ENCODE measurements at regions of chr11 and their contacts with region 1.

Region 1: DNA sequence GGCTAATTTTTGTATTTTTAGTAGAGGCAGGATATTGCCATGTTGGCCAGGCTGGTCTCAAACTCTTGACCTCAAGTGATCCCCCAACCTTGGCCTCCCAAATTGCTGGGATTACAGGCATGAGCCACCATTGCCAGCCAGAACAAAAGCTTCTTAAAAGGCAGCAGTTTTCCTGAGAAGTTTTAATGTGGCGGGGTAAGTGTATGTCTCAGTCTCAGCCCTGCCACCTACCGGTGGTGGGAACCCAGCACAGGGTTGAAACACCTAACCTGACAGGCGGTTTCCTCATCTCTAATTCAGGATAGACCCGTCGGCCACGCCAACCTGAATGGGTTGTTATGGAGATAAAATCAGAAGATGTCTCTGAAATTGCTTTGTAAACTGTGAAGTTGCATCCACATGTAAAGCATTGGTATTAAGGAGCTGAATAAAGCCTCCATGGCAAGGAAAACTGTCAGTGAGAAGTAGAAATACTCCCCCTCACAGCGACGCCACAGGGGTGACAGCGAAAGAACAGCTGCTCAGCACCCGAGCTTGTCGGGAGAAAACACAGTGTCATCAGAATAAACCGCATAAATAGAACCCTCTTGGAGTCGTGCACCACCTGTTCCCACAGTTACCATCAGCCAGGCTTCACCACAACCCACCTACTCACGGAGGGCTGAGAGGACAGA is 165.9 kb upstream of the NCAM1 start:
- DNase-seq: peak; percentile 45
- H3K4me3 Mint-ChIP-seq: no peak overlapping the region
- H3K27ac Mint-ChIP-seq: no peak overlapping the region
- H3K4me1 Mint-ChIP-seq: peaks cover 11% of the 10 kb centered on the region
- H3K27me3 Mint-ChIP-seq: peaks cover 3% of the 10 kb centered on the region

Region 2: GRCh38 chr11:113289431-113290187 is 494.3 kb after region 1 on chr11:
- CTCF ChIA-PET with region 1: interaction called, 6 read pairs
- POLR2A ChIA-PET with region 1: no interaction called
- intact Hi-C with region 1: loop called (anchors 2 kb)
- DNase-seq: peak; percentile 79
- H3K4me3 Mint-ChIP-seq: no peak overlapping the region
- H3K27ac Mint-ChIP-seq: no peak overlapping the region
- H3K4me1 Mint-ChIP-seq: no peaks in the 10 kb centered on the region
- H3K27me3 Mint-ChIP-seq: peaks cover 11% of the 10 kb centered on the region